Mammary epithelial cell (primary cell): ENCODE measurements at regions of chr17 and their contacts with region 1.

Region 1: DNA sequence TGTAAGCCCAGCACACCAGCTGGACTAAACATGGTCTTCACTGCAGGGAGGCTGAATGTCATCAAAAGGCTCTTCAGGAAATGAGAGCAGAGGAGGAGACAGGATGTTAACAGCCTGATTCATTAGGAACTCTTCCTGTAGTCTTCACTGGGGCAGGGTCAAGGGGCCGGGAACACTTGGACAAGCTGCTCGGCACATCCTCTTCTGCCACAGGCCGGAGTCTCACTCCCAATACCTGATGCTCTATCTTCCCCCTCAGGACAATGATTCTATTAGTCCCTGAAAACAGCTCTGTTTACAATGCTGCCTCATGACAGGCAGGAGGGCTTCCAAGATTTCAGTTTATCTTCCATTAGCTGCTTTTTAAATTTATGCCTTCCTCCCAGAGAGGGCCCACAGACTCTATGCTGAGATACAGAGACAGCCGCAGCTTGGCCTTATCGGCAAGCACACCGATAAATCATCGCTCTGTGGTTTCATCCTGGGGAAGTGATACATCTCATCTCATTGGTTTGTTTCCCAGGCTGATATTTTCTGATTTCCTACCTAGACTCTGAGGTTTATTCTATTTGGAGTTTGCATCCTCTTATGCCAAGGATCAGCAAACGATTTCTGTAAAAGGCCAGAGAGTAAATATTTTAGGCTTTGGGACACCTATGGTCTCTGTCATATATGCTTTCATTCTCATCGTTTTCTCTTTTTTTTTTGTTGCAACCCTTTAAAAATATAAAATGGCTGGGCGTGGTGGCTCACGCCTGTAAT is 214.0 kb upstream of the ASIC2 start:
- DNase-seq: no peak
- H3K4me3 ChIP-seq: no peak overlapping the region
- H3K27ac ChIP-seq: no peak overlapping the region
- H3K4me1 ChIP-seq: no peaks in the 10 kb centered on the region
- H3K27me3 ChIP-seq: no peaks in the 10 kb centered on the region
- CTCF ChIP-seq: no peak

Region 2: GRCh38 chr17:33469911-33470310 is 37.2 kb before region 1 on chr17:
- CTCF ChIA-PET with region 1: no interaction called
- dilution Hi-C with region 1: no loop called
- in situ Hi-C with region 1: no loop called
- intact Hi-C with region 1: no loop called
- DNase-seq: peak; percentile 57
- H3K4me3 ChIP-seq: no peak overlapping the region
- H3K27ac ChIP-seq: no peak overlapping the region
- H3K4me1 ChIP-seq: no peaks in the 10 kb centered on the region
- H3K27me3 ChIP-seq: no peaks in the 10 kb centered on the region
- CTCF ChIP-seq: no peak

Region 3: DNA sequence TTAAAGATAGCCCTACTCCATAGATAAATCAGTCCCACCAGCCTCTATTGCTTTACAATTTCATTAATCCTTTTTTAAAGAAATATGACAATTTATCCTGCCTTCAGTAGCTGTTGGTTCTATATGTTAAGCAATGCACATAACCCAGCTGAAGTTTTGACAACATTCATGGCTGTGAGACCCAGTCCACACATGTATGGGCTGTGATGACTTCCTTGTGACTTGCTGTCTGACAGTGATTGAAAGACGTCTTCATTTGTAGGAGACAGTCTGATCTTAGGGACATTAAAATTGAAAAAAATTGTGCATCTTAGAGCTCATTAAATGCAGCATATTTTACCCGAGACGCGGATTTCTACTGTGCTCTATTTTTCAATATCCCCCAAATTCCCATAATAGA is 38.1 kb after region 1 on chr17:
- CTCF ChIA-PET with region 1: no interaction called
- dilution Hi-C with region 1: no loop called
- in situ Hi-C with region 1: no loop called
- intact Hi-C with region 1: no loop called
- DNase-seq: no peak
- H3K4me3 ChIP-seq: no peak overlapping the region
- H3K27ac ChIP-seq: no peak overlapping the region
- H3K4me1 ChIP-seq: no peaks in the 10 kb centered on the region
- H3K27me3 ChIP-seq: no peaks in the 10 kb centered on the region
- CTCF ChIP-seq: no peak

Region 4: DNA sequence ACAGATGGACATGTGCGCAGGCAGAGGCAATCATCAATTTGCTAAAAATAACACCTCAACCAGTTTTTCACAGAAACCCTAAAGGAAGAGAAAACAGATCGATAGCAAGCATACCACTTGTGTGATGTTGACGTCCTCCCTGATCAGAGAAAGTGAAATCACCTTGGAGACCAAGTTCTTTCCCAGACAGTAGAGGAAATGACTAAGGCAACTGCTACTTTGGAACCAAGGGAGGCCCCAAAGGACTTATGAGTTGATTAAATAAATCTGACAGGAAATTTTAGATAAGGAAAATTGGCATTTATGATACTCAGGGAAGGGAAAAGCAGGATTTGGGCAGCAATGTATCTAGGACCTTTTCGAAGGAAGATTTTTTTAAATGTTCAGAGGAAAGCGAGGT is 53.1 kb after region 1 on chr17:
- CTCF ChIA-PET with region 1: no interaction called
- dilution Hi-C with region 1: loop called (anchors 5 kb)
- in situ Hi-C with region 1: no loop called
- intact Hi-C with region 1: no loop called
- DNase-seq: no peak
- H3K4me3 ChIP-seq: no peak overlapping the region
- H3K27ac ChIP-seq: no peak overlapping the region
- H3K4me1 ChIP-seq: no peaks in the 10 kb centered on the region
- H3K27me3 ChIP-seq: no peaks in the 10 kb centered on the region
- CTCF ChIP-seq: no peak

Region 5: GRCh38 chr17:33602981-33603380 is 95.9 kb after region 1 on chr17:
- CTCF ChIA-PET with region 1: no interaction called
- dilution Hi-C with region 1: loop called (anchors 5 kb)
- in situ Hi-C with region 1: no loop called
- intact Hi-C with region 1: no loop called
- DNase-seq: no peak
- H3K4me3 ChIP-seq: no peak overlapping the region
- H3K27ac ChIP-seq: no peak overlapping the region
- H3K4me1 ChIP-seq: no peaks in the 10 kb centered on the region
- H3K27me3 ChIP-seq: peaks cover 2% of the 10 kb centered on the region
- CTCF ChIP-seq: no peak